ENCODE measurements at regions of chr4 and their contacts with region 1.

Region 1: GRCh38 chr4:80709082-80709869 is 321.2 kb upstream of the BMP3 start:
- DNase-seq: peak in 6 of 9 donors; percentile 29 to 66 (median 52)
- ATAC-seq: peak; percentile 56
- H3K4me3 ChIP-seq: no peak overlapping the region
- H3K4me3 Mint-ChIP-seq: peak overlapping the region in 8 of 10 donors; percentile 11 to 62 (median 48)
- H3K27ac ChIP-seq: no peak overlapping the region
- H3K27ac Mint-ChIP-seq: peak overlapping the region in 8 of 9 donors; percentile 36 to 84 (median 61)
- H3K4me1 ChIP-seq: peaks cover 0 to 8% of the 10 kb centered on the region in 2 donors
- H3K4me1 Mint-ChIP-seq: peaks cover 0 to 44% (median 37%) of the 10 kb centered on the region in 7 donors
- H3K27me3 ChIP-seq: no peaks in the 10 kb centered on the region
- H3K27me3 Mint-ChIP-seq: peaks cover 0 to 3% (median 0%) of the 10 kb centered on the region in 5 donors

Region 2: DNA sequence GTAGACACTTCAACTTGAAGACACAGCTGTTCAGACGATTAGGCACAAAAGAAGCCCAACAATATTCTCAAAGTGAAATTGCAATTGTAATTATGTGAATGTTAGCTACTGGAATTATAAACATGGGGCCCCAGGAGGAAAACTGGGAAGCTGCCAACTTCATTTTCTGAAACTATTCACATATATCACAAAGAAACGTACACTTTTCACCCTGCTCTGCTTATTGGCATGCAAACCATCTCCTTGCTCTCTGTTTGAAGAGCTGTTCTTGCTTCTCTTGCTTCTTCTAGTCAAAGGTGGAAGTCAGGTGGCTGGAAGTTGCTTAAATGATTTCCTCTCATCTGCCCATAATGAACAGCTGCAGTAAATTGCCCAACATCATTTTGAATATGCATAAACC is 53.6 kb before region 1 on chr4:
- CTCF ChIA-PET with region 1: no interaction called
- POLR2A ChIA-PET with region 1: no interaction called
- intact Hi-C with region 1: loop called in 1 of 2 experiments (anchors 10 kb)
- DNase-seq: no peak
- ATAC-seq: no peak
- H3K4me3 ChIP-seq: no peak overlapping the region
- H3K4me3 Mint-ChIP-seq: no peak overlapping the region
- H3K27ac ChIP-seq: no peak overlapping the region
- H3K27ac Mint-ChIP-seq: no peak overlapping the region
- H3K4me1 ChIP-seq: no peaks in the 10 kb centered on the region
- H3K4me1 Mint-ChIP-seq: peaks cover 0 to 5% (median 0%) of the 10 kb centered on the region in 7 donors
- H3K27me3 ChIP-seq: no peaks in the 10 kb centered on the region
- H3K27me3 Mint-ChIP-seq: peaks cover 0 to 4% (median 0%) of the 10 kb centered on the region in 5 donors

Measured in naive thymus-derived CD4-positive, alpha-beta T cell (primary cell).